Naive thymus-derived CD8-positive, alpha-beta T cell (primary cell): ENCODE measurements at regions of chr3 and their contacts with region 1.

Region 1: GRCh38 chr3:15268033-15268631 is 62.1 kb downstream of the CAPN7 start:
- DNase-seq: peak; percentile 69 to 92 (median 82)
- ATAC-seq: peak; percentile 34 to 53
- H3K4me3 Mint-ChIP-seq: peak overlapping the region in 9 of 10 donors; percentile 10 to 62 (median 36)
- H3K27ac Mint-ChIP-seq: peak overlapping the region in 6 of 10 donors; percentile 15 to 79 (median 53)
- H3K4me1 Mint-ChIP-seq: peaks cover 24 to 87% (median 73%) of the 10 kb centered on the region in 4 donors
- H3K27me3 Mint-ChIP-seq: no peaks in the 10 kb centered on the region

Region 2: GRCh38 chr3:15332405-15333098 is 64.4 kb after region 1 on chr3 and contains the start of gene SH3BP5:
- POLR2A ChIA-PET with region 1: interaction called, 49 read pairs
- DNase-seq: peak; percentile 47 to 71 (median 66)
- ATAC-seq: peak; percentile 90 to 91
- H3K4me3 Mint-ChIP-seq: peak within 1 kb of the TSS; percentile 89 to 96 (median 92)
- H3K27ac Mint-ChIP-seq: peak within 1 kb of the TSS; percentile 41 to 94 (median 90)
- H3K4me1 Mint-ChIP-seq: peaks cover 15 to 54% (median 48%) of the 10 kb centered on the region in 4 donors
- H3K27me3 Mint-ChIP-seq: no peaks in the 10 kb centered on the region
- polyA plus RNA-seq, gene SH3BP5: 12.1 to 26.1 (median 13.7) TPM

Region 3: GRCh38 chr3:15377961-15378791 is 110.0 kb after region 1 on chr3:
- POLR2A ChIA-PET with region 1: interaction called, 11 read pairs
- DNase-seq: peak; percentile 79 to 98 (median 94)
- ATAC-seq: peak; percentile 96 to 97
- H3K4me3 Mint-ChIP-seq: peak overlapping the region in 3 of 10 donors; percentile 2 to 50 (median 17)
- H3K27ac Mint-ChIP-seq: peak overlapping the region; percentile 43 to 95 (median 93)
- H3K4me1 Mint-ChIP-seq: peaks cover 0 to 25% (median 8%) of the 10 kb centered on the region in 4 donors
- H3K27me3 Mint-ChIP-seq: no peaks in the 10 kb centered on the region